GM13977 (cell line): ENCODE measurements at regions of chr13 and their contacts with region 1.

Region 1: GRCh38 chr13:99281811-99282263 is 23.7 kb upstream of the GPR18 start:
- DNase-seq: peak; percentile 17
- CTCF ChIP-seq: no peak

Region 2: GRCh38 chr13:99386911-99387788 is 105.3 kb after region 1 on chr13:
- in situ Hi-C with region 1: loop called (anchors 25 kb)
- DNase-seq: peak; percentile 85
- CTCF ChIP-seq: peak; percentile 92